PC-9 (cell line): ENCODE measurements at regions of chr11 and their contacts with region 1.

Region 1: DNA sequence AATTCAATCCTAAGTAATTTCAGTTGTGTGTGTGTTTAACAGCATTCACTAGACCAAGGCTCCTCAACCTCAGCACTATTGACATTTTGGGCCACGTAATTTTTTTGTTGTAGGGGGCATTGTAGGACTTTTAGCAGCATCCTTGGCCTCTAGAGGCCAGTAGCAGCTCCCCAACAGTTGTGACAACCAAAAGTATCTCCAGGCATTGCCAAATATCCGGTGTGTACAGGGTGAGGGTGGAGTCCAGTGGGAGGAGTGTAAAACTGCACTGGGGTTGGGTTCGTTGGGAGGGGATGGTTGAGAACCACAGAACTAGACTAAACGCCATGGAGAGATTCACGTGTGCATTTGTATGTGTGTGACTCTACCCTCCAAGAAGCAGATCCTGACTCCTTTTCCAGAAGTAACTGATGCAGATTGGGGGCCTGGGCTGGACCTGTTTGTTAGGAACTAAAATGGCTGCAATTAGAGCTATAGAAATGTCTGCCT is 5.9 kb upstream of the PHF21A start:
- DNase-seq: peak; percentile 67 to 81
- H3K4me3 ChIP-seq: no peak overlapping the region
- H3K27ac ChIP-seq: no peak overlapping the region
- H3K4me1 ChIP-seq: peaks cover 26% of the 10 kb centered on the region
- H3K27me3 ChIP-seq: no peaks in the 10 kb centered on the region
- CTCF ChIP-seq: peak; percentile 66

Region 2: GRCh38 chr11:46066335-46066734 is 60.9 kb before region 1 on chr11:
- CTCF ChIA-PET with region 1: no interaction called
- POLR2A ChIA-PET with region 1: no interaction called
- intact Hi-C with region 1: no loop called
- DNase-seq: peak in 1 of 2 experiments; percentile 8
- H3K4me3 ChIP-seq: no peak overlapping the region
- H3K27ac ChIP-seq: no peak overlapping the region
- H3K4me1 ChIP-seq: no peaks in the 10 kb centered on the region
- H3K27me3 ChIP-seq: no peaks in the 10 kb centered on the region
- CTCF ChIP-seq: no peak

Region 3: DNA sequence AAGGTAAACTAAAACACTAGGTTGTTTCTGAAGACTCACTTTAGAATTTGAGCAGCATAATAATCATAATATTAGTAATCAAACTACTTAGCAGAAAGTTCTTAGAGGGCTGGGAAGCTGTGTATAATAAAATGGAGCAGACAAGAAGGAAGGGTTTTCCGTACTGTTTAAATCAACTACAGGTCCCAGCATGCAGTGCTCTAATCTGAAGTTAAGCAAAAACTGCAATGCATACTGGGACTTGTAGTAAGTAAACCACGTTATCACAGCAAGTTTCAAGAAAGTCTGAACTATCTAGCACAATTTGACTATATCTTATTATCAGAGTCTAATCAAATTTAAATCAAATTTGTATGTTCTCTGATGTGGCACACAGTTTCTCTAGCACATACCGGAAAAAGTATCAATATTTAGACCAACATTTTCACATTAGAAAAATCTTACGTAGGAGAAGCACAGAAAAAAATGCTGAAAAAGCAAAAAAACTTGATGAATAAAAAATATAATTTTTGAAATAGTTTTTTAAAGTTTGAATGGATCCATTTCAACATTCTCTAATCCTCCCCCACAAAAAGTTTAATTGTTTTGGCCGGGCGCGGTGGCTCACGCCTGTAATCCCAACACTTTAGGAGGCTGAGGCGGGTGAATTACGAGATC is 14.1 kb before region 1 on chr11:
- CTCF ChIA-PET with region 1: no interaction called
- POLR2A ChIA-PET with region 1: no interaction called
- intact Hi-C with region 1: no loop called
- DNase-seq: peak in 1 of 2 experiments; percentile 49
- H3K4me3 ChIP-seq: no peak overlapping the region
- H3K27ac ChIP-seq: no peak overlapping the region
- H3K4me1 ChIP-seq: peaks cover 13% of the 10 kb centered on the region
- H3K27me3 ChIP-seq: no peaks in the 10 kb centered on the region
- CTCF ChIP-seq: no peak

Region 4: GRCh38 chr11:46159699-46160098 is 32.5 kb after region 1 on chr11:
- CTCF ChIA-PET with region 1: interaction called, 4 read pairs
- POLR2A ChIA-PET with region 1: no interaction called
- intact Hi-C with region 1: loop called (anchors 1 kb)
- DNase-seq: peak; percentile 84 to 97
- H3K4me3 ChIP-seq: no peak overlapping the region; the same call in 1 of the 2 replicates
- H3K27ac ChIP-seq: peak overlapping the region; percentile 71
- H3K4me1 ChIP-seq: peaks cover 38% of the 10 kb centered on the region
- H3K27me3 ChIP-seq: no peaks in the 10 kb centered on the region
- CTCF ChIP-seq: no peak

Region 5: DNA sequence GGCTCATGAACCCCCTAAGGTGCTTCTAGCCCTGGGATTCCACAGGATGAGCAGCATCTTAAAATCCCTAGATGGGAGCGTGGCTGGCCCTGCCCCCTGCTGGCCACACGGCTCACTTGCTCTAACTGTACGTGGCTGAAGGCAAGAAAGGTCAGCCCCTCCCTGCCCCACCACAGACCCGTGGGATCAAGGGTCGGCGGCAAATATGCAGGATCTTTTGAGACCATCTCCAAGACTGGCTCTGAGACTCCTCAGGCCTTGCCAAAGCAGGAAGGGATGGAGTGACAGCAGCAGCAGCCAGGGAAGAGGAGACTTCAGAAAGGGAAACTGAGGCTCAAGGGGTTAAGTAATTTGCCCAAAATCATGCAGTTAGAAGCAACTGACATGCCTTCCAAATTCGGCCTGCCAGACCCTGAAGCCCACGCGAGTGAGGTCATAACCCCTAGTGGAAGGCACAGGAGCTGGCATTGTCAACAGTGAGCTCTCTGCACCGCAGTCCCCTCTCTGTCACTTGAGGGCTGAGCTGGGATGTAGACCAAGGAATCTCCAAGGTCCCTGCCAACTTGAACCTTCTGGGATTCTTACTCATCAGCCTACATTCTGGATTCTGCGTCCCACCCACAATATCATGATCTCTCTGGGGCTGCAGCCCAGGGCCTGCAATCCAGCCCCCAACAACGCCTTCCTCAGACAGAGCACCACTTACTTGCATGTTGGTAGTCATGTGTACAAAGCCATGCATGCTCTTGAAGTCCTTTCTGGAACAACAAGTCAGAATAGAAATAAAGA is 181.6 kb after region 1 on chr11:
- CTCF ChIA-PET with region 1: no interaction called
- POLR2A ChIA-PET with region 1: no interaction called
- intact Hi-C with region 1: loop called (anchors 1 kb)
- DNase-seq: peak; percentile 54 to 74
- H3K4me3 ChIP-seq: no peak overlapping the region
- H3K27ac ChIP-seq: no peak overlapping the region
- H3K4me1 ChIP-seq: peaks cover 31% of the 10 kb centered on the region
- H3K27me3 ChIP-seq: no peaks in the 10 kb centered on the region
- CTCF ChIP-seq: peak; percentile 99

Region 6: GRCh38 chr11:46319074-46319453 is 191.9 kb after region 1 on chr11:
- CTCF ChIA-PET with region 1: no interaction called
- POLR2A ChIA-PET with region 1: no interaction called
- intact Hi-C with region 1: no loop called
- DNase-seq: peak in 1 of 2 experiments; percentile 34
- H3K4me3 ChIP-seq: no peak overlapping the region
- H3K27ac ChIP-seq: no peak overlapping the region
- H3K4me1 ChIP-seq: peaks cover 14% of the 10 kb centered on the region; the same call in 1 of the 2 replicates
- H3K27me3 ChIP-seq: no peaks in the 10 kb centered on the region
- CTCF ChIP-seq: no peak